ENCODE measurements at regions of chr9 and their contacts with region 1.

Region 1: DNA sequence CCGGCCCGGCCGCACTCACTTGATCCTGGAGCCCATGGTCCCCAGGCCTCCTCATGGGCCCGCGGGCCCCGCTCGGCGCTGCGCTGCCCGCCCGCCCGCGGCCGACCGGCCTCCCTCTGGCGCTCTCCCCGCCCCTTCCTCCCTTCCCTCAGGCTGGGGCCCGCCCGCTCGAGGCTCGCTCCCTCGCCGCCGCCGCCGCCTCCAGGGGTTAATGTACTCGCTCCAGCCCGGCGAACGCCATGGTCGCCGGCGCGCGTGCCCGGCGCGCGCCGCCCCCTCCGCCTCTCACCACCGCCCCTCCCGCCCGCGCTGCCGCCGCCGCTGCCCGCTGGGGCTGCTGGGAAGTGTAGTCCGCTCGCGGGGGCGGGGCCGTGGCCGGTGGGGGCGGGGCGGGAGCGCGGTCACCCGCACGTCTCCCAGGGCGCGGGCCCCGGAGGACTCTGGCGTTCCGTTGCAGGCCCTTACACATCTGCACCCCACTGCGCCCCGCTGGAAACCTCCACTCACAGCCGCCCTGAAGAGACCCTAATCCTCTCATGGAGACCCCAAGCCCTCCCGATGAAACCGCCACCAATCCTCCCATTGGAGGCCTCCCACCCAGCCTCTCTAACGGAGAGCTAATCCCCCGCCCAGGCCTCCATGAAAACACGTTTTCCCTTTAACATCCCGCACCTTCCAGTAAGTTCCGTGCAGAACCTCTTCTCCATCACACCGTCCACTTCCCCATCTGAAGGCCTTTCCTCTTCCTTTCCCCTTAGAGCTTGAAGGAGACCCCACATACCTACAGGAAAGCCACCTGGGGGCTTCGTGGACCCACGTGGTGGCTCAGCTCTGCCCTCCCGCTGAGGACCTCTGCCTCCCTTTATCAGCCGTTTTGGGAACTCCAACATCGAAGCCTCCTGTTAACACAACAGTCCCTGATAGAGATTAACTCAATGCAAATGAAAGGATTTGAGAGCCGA is at the start of gene DENND1A:
- DNase-seq: peak; percentile 77
- ATAC-seq: peak; percentile 89
- H3K4me3 ChIP-seq: peak within 1 kb of the TSS; percentile 67 to 83 (median 75)
- H3K27ac ChIP-seq: peak within 1 kb of the TSS; percentile 82
- H3K4me1 ChIP-seq: peaks cover 81% of the 10 kb centered on the region
- H3K27me3 ChIP-seq: no peaks in the 10 kb centered on the region
- CTCF ChIP-seq: no peak
- EP300 ChIP-seq: no peak
- POLR2A ChIP-seq: peak; percentile 29 to 77; a peak in 3 of 4 replicates
- RAD21 ChIP-seq: no peak; the same call in 1 of the 2 replicates
- total RNA-seq, gene DENND1A: 14.8 and 15.6 TPM in 2 replicates

Region 2: DNA sequence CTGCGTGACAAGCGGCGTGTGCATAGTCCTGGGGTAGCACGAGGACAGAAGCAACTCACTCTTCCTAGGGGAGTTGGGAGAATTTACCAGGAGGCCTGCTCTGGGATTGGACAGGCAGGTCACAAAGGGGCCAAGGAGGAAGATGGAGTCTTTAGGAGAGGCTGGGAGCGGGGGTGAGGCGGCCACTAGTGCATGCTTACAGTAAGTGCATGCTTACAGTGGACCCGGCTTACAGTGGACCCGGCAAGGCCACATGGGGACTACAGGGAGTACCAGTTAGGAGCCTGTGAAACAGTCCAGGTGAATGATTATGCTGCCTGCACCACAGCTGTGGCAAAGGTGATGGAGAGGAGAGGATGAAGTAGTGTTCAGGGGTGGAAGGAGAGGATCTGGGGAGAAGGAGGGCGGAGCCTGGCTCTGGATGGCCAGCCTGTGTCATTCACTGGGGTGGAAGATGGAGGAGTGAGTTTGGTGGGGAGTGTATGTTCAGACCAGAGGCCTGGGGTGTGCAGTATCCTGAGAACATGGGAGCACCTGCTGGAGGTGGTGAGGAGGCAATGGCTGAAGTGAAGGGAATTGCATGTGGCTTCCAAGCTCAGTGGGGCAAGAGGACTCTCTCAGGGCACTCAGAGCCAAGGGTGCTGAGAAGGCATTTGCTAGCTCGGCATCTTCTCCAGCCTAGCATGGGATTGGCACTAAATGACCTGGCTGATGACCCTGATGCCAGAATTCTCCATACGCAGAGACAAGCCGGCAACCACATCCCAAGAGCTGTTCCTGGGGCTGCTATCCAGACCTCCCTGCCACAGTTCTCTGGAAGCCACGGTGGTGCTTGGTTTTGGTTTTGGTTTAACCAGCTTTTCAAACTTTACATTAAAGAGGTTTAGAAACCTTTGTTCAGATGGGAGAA is 495.3 kb before region 1 on chr9:
- CTCF ChIA-PET with region 1: no interaction called
- POLR2A ChIA-PET with region 1: no interaction called
- in situ Hi-C with region 1: no loop called
- intact Hi-C with region 1: no loop called
- DNase-seq: peak; percentile 12
- ATAC-seq: peak; percentile 88
- H3K4me3 ChIP-seq: peak overlapping the region in 2 of 3 experiments; percentile 19 to 34; a peak in 2 of 6 replicates
- H3K27ac ChIP-seq: peak overlapping the region; percentile 69
- H3K4me1 ChIP-seq: peaks cover 46% of the 10 kb centered on the region
- H3K27me3 ChIP-seq: no peaks in the 10 kb centered on the region
- CTCF ChIP-seq: peak; percentile 46
- EP300 ChIP-seq: no peak
- POLR2A ChIP-seq: no peak
- RAD21 ChIP-seq: no peak

Region 3: GRCh38 chr9:123749580-123750202 is 180.5 kb before region 1 on chr9:
- CTCF ChIA-PET with region 1: no interaction called
- POLR2A ChIA-PET with region 1: no interaction called
- in situ Hi-C with region 1: no loop called
- intact Hi-C with region 1: loop called (anchors 10 kb)
- DNase-seq: no peak
- ATAC-seq: no peak
- H3K4me3 ChIP-seq: no peak overlapping the region
- H3K27ac ChIP-seq: no peak overlapping the region
- H3K4me1 ChIP-seq: peaks cover 9% of the 10 kb centered on the region; the same call in 1 of the 2 replicates
- H3K27me3 ChIP-seq: no peaks in the 10 kb centered on the region
- CTCF ChIP-seq: no peak
- EP300 ChIP-seq: no peak
- POLR2A ChIP-seq: no peak
- RAD21 ChIP-seq: no peak

Region 4: GRCh38 chr9:123861086-123861707 is 69.0 kb before region 1 on chr9:
- CTCF ChIA-PET with region 1: no interaction called
- POLR2A ChIA-PET with region 1: no interaction called
- in situ Hi-C with region 1: no loop called
- intact Hi-C with region 1: loop called (anchors 2 kb)
- DNase-seq: peak; percentile 35
- ATAC-seq: peak; percentile 37; the same call in 2 of the 3 replicates
- H3K4me3 ChIP-seq: no peak overlapping the region
- H3K27ac ChIP-seq: peak overlapping the region; percentile 45
- H3K4me1 ChIP-seq: peaks cover 59% of the 10 kb centered on the region
- H3K27me3 ChIP-seq: no peaks in the 10 kb centered on the region
- CTCF ChIP-seq: no peak
- EP300 ChIP-seq: peak in 1 of 2 experiments; percentile 44; a peak in 1 of 4 replicates
- POLR2A ChIP-seq: no peak
- RAD21 ChIP-seq: no peak

Region 5: GRCh38 chr9:123946001-123946831 is 16.1 kb after region 1 on chr9:
- CTCF ChIA-PET with region 1: no interaction called
- POLR2A ChIA-PET with region 1: interaction called, 3 read pairs
- in situ Hi-C with region 1: no loop called
- intact Hi-C with region 1: loop called (anchors 2 kb)
- DNase-seq: no peak
- ATAC-seq: no peak
- H3K4me3 ChIP-seq: no peak overlapping the region
- H3K27ac ChIP-seq: no peak overlapping the region
- H3K4me1 ChIP-seq: peaks cover 31% of the 10 kb centered on the region
- H3K27me3 ChIP-seq: peaks cover 0 to 7% of the 10 kb centered on the region in 2 experiments; a peak in 1 of 5 replicates
- CTCF ChIP-seq: no peak
- EP300 ChIP-seq: no peak
- POLR2A ChIP-seq: no peak
- RAD21 ChIP-seq: no peak

Region 6: GRCh38 chr9:124118894-124119293 is 188.7 kb after region 1 on chr9:
- CTCF ChIA-PET with region 1: no interaction called
- POLR2A ChIA-PET with region 1: no interaction called
- in situ Hi-C with region 1: no loop called
- intact Hi-C with region 1: no loop called
- DNase-seq: no peak
- ATAC-seq: no peak
- H3K4me3 ChIP-seq: no peak overlapping the region
- H3K27ac ChIP-seq: no peak overlapping the region
- H3K4me1 ChIP-seq: no peaks in the 10 kb centered on the region
- H3K27me3 ChIP-seq: peaks cover 2 to 8% of the 10 kb centered on the region in 2 experiments; a peak in 3 of 5 replicates
- CTCF ChIP-seq: no peak
- EP300 ChIP-seq: no peak
- POLR2A ChIP-seq: no peak
- RAD21 ChIP-seq: no peak

Region 7: GRCh38 chr9:125161284-125161918 is 1231.2 kb after region 1 on chr9:
- CTCF ChIA-PET with region 1: no interaction called
- POLR2A ChIA-PET with region 1: no interaction called
- in situ Hi-C with region 1: no loop called
- intact Hi-C with region 1: no loop called
- DNase-seq: no peak
- ATAC-seq: no peak
- H3K4me3 ChIP-seq: no peak overlapping the region
- H3K27ac ChIP-seq: no peak overlapping the region
- H3K4me1 ChIP-seq: peaks cover 8% of the 10 kb centered on the region; the same call in 1 of the 2 replicates
- H3K27me3 ChIP-seq: no peaks in the 10 kb centered on the region
- CTCF ChIP-seq: no peak
- EP300 ChIP-seq: no peak
- POLR2A ChIP-seq: no peak
- RAD21 ChIP-seq: no peak

Measured in HepG2 (cell line).